Calu3 (cell line): ENCODE measurements at regions of chr10 and their contacts with region 1.

Region 1: DNA sequence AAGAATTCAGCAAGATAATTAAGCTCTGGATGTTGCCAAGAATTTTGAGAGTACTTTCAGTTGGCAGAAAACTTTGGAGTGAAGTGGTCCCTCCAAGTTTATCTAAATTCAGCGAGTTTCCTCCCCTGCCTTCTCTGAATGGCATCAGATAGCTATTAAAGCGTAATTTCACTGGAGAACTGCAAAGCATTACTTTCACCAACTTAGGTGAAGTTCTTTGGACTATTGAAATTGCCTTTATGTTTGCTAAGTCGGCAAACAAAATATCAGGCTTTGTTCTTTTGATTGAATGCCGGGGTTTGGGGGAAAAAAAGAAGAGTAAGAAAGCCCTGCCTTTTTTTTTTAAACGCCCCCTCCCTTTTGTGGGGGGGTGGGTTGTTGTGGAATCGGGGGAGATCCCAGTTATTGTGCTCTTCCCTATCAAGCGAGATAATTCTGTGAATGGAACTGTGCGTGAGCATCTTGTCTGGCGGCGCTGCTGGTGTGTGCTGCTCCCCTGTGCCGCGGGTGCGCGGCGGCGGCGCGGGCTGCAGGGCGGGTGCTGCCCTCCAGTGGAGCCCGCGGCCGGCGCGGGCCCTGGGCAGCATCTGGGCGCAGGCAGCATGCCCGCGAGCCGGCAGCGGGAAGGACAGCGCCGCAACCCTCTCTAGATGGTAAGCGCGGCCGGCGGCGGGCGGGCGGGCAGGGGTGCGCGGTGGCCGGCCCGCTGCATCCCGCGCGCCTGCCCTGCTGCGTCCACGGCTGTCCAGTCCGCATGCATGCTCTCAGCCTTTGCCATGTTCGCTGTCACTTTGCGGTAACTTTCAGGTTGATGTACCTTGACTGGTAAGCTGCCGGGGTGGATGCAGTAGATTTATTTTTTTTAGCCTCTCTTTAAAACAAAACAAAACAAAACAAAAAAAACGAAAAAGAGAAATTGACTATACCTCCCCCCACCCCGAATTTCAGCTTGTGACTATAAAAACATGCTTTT is 176.5 kb downstream of the TCF7L2 start:
- DNase-seq: peak; percentile 72
- H3K4me3 Mint-ChIP-seq: peak overlapping the region; percentile 68
- H3K27ac Mint-ChIP-seq: no peak overlapping the region
- H3K4me1 Mint-ChIP-seq: peaks cover 34% of the 10 kb centered on the region
- H3K27me3 Mint-ChIP-seq: no peaks in the 10 kb centered on the region
- CTCF ChIP-seq: peak; percentile 62

Region 2: GRCh38 chr10:112558476-112559142 is 567.9 kb before region 1 on chr10:
- CTCF ChIA-PET with region 1: no interaction called
- intact Hi-C with region 1: loop called (anchors 10 kb)
- DNase-seq: no peak
- H3K4me3 Mint-ChIP-seq: no peak overlapping the region
- H3K27ac Mint-ChIP-seq: no peak overlapping the region
- H3K4me1 Mint-ChIP-seq: no peaks in the 10 kb centered on the region
- H3K27me3 Mint-ChIP-seq: no peaks in the 10 kb centered on the region
- CTCF ChIP-seq: no peak

Region 3: DNA sequence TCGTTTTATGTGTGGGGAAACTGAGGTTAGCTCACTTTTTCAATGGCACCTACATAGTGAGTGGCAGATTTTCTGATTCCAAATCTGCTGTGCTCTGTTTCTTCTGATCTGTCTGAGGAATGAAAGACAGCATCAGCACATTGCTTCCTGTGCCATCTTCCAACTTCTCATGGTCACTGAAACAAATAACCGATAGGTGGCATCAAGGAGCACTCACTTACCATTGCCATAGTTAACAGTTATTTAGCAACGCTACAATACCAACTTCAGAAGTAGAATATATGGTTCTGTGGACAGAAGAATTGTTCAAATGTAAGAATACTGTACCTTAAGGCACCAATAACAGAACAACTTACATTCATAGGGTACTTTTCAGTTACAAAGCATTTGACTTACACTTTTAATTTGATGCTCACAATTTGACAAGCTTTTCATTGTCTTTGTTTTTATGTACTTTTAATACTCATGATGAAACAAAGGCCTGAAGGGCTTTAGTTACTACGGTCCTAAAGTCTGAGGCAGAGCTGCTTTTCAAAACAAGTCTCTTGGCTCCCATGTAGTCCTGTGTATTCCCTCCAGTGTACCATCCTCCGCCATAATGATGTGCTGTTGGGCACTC is 405.3 kb before region 1 on chr10:
- CTCF ChIA-PET with region 1: no interaction called
- intact Hi-C with region 1: loop called (anchors 10 kb)
- DNase-seq: peak; percentile 19
- H3K4me3 Mint-ChIP-seq: no peak overlapping the region
- H3K27ac Mint-ChIP-seq: no peak overlapping the region
- H3K4me1 Mint-ChIP-seq: peaks cover under 1% of the 10 kb centered on the region
- H3K27me3 Mint-ChIP-seq: no peaks in the 10 kb centered on the region
- CTCF ChIP-seq: peak; percentile 44

Region 4: DNA sequence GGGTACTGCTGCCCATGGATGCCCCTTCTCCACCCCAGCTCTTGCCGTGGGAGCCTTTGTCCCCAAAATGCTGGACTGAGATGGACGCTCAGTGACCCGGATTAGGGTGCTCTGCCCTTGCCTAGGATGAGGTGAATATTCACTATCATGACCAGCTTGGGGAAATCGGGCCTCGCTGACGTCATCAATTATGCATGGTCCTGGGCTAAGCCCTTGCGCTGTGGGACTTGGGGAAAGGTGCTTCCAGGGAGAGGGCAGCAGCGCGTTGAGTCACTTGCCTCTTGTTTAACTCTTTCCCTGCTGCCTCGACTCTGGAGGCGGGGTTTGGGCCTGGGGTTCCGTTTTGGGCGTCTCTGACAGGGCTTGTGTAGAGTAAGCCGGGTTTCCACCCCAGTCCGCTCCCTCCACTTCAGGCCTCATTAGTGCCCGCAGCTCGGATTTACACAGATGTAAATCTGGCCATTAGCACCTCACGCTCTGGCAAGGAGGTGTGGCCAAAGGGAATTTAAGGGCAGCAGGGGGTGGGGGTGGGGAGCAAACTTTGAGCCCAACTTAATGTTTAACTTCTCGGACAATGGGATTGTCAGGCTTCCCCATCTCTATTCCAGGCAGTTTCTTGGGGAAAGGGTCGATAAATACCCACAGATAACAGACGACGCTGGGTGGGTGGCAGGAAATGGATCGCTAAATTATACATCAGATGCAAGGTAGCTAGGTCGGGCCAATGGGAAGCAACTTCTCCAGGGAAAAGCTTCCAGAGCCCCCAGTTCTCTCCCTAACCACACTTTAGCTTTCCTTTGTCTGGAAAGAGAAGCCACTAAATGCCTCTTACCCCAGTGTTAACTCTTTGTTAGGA is 227.7 kb before region 1 on chr10:
- CTCF ChIA-PET with region 1: no interaction called
- intact Hi-C with region 1: no loop called
- DNase-seq: peak; percentile 47
- H3K4me3 Mint-ChIP-seq: peak overlapping the region; percentile 64
- H3K27ac Mint-ChIP-seq: peak overlapping the region; percentile 67
- H3K4me1 Mint-ChIP-seq: peaks cover 15% of the 10 kb centered on the region
- H3K27me3 Mint-ChIP-seq: no peaks in the 10 kb centered on the region
- CTCF ChIP-seq: no peak

Region 5: DNA sequence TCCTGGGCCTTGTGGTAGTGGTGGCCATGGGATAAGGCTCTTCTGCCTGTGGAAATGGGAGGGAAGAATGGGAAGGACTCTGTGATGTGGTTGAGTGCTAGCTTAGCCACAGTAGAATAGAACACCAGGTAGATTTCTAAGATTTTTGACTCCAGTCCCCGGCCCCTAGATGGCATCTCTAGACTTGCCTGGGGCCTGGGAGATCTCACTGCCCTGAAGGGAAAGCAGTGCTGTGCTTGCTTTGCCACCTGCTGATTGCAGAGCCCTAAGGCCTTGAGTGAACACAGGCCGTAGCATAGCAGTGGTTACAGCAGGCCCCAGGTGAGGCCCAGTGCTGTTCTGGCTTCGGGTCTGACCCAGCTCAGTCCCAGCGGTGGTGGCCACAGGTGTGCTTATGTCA is 75.5 kb after region 1 on chr10:
- CTCF ChIA-PET with region 1: no interaction called
- intact Hi-C with region 1: no loop called
- DNase-seq: no peak
- H3K4me3 Mint-ChIP-seq: no peak overlapping the region
- H3K27ac Mint-ChIP-seq: no peak overlapping the region
- H3K4me1 Mint-ChIP-seq: no peaks in the 10 kb centered on the region
- H3K27me3 Mint-ChIP-seq: peaks cover 15% of the 10 kb centered on the region
- CTCF ChIP-seq: no peak